T-cell (primary cell): ENCODE measurements at regions of chr6 and their contacts with region 1.

Region 1: DNA sequence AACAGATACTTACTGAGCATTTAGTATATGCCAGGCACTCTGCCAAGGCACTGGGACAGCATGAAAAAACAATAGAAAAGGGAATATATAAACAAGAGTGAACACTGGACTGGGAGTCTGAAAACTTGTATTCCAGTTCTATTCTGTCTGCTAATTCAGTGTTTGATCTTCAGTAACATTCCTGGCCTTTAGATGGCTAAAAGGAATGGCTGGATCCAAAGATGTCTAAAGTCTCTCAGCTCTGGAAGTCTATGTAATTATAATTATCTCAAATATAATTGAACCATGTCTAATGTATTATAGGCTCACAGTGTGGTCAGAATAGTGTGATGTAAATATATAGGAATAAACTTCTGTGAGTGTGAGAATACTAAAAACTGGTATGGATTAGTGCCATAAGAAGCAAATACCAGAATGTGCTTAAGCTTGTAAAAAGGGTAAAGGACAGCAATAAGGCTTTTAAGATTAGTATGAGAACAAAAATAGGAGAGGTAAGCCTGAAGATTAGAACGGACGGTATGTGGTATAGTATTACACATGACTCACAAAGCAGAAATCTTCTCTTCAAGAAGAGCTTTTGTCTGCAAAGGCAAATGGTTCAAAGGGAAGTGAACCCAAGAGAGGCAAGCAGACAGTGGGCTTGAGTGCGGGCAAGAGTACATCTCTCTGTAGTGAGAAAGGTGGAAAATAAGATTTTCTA is 68.5 kb downstream of the TMEM200A start:
- DNase-seq: no peak
- ATAC-seq: no peak
- H3K4me3 ChIP-seq: no peak overlapping the region
- H3K4me3 Mint-ChIP-seq: no peak overlapping the region
- H3K27ac ChIP-seq: no peak overlapping the region
- H3K27ac Mint-ChIP-seq: no peak overlapping the region
- H3K4me1 ChIP-seq: no peaks in the 10 kb centered on the region
- H3K4me1 Mint-ChIP-seq: no peaks in the 10 kb centered on the region
- H3K27me3 ChIP-seq: no peaks in the 10 kb centered on the region
- H3K27me3 Mint-ChIP-seq: no peaks in the 10 kb centered on the region

Region 2: DNA sequence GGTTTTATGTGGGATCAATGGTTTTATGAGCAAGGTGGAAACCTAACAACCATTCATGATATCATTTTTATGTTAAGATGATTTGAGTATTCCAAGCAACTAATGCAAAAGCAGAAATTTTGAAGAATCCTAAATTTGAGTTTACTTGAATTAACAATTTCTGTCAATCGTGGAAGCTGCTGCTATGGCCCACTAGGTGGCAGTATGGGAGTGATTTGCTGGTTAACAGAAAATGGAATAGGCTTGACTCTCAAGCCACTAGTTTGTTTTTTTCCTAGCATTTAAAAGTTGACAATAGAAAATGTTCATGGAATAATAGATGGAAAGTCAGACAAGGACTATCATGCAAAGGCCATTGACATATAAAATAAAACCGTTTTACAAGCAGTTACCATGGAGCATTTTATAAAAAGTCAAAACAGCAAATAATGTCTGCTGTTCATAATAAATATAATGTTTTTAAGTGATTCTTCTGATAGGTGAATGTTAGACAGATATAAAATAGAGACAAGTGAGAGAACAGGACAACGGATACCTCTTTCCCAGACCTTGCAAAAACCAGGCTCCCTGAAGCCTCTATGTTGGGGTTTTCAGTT is 111.6 kb before region 1 on chr6:
- CTCF ChIA-PET with region 1: no interaction called
- POLR2A ChIA-PET with region 1: no interaction called
- DNase-seq: peak in 32 of 35 experiments; percentile 12 to 85 (median 42)
- ATAC-seq: peak in 2 of 4 experiments; percentile 33 to 48
- H3K4me3 ChIP-seq: no peak overlapping the region
- H3K4me3 Mint-ChIP-seq: no peak overlapping the region
- H3K27ac ChIP-seq: no peak overlapping the region
- H3K27ac Mint-ChIP-seq: no peak overlapping the region
- H3K4me1 ChIP-seq: peaks cover 0 to 5% of the 10 kb centered on the region in 2 experiments
- H3K4me1 Mint-ChIP-seq: peaks cover 0 to 6% (median 5%) of the 10 kb centered on the region in 3 donors
- H3K27me3 ChIP-seq: no peaks in the 10 kb centered on the region
- H3K27me3 Mint-ChIP-seq: no peaks in the 10 kb centered on the region

Region 3: DNA sequence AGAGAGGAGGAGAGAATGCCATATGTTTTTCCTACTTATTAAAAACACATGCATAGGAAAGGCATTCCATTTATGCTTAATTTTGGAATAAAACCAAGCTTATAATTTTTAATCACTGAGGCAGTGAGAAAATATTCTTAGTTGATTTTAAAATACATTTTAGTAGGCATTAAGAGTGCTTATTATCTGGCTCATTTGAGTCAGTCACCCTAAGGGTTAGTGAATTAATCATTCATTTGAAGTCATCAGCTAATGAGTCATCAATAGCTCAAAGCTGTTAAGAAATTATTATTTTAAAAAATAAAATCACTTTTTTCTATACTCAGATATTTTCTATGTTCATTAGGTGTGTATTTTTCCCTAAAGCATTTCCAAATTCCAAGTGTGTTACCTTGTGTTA is 13.1 kb after region 1 on chr6:
- CTCF ChIA-PET with region 1: interaction called in 1 of 2 experiments, 11 read pairs
- POLR2A ChIA-PET with region 1: no interaction called
- DNase-seq: no peak
- ATAC-seq: no peak
- H3K4me3 ChIP-seq: no peak overlapping the region
- H3K4me3 Mint-ChIP-seq: no peak overlapping the region
- H3K27ac ChIP-seq: no peak overlapping the region
- H3K27ac Mint-ChIP-seq: no peak overlapping the region
- H3K4me1 ChIP-seq: no peaks in the 10 kb centered on the region
- H3K4me1 Mint-ChIP-seq: peaks cover 0 to 7% (median 2%) of the 10 kb centered on the region in 3 donors
- H3K27me3 ChIP-seq: no peaks in the 10 kb centered on the region
- H3K27me3 Mint-ChIP-seq: no peaks in the 10 kb centered on the region

Region 4: DNA sequence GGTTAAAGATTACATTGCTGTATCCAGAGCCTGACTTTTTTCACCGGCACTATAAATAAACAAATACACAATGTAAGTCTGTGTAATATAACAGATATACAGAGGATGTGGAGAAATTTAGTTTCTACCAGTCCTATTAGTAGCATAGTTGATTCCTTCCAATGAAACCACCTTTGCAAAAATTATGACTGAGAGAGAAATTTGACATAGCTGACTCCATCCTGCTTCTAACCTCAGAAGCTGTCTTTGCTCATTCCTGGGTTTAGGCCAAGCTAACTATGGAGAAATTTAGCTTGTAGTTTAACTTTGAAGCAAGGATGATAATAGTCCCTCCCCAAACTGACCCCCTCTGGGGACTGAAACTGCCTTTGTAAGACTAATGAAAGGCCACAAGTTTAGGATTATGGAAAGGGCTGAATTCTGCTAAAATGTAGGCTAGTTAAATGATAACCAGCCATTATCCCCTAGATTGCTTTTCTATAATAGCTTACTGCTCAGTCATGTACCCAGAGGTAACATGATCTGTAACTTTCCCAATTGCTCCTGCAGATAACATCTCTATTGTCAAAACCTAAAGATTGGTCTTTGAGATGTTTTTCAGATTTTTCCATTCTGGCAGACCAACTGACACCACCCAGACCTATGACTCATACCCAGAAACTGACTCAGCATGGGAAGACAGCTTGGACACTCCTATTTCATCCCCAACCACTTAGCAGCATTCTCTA is 965.9 kb after region 1 on chr6:
- CTCF ChIA-PET with region 1: no interaction called
- POLR2A ChIA-PET with region 1: interaction called in 1 of 2 experiments, 11 read pairs
- DNase-seq: no peak
- ATAC-seq: no peak
- H3K4me3 ChIP-seq: no peak overlapping the region
- H3K4me3 Mint-ChIP-seq: no peak overlapping the region
- H3K27ac ChIP-seq: no peak overlapping the region
- H3K27ac Mint-ChIP-seq: peak overlapping the region in 1 of 2 donors; percentile 2
- H3K4me1 ChIP-seq: no peaks in the 10 kb centered on the region
- H3K4me1 Mint-ChIP-seq: peaks cover 0 to 8% (median 5%) of the 10 kb centered on the region in 3 donors
- H3K27me3 ChIP-seq: no peaks in the 10 kb centered on the region
- H3K27me3 Mint-ChIP-seq: no peaks in the 10 kb centered on the region